IMR-90 (cell line): ENCODE measurements at regions of chr10 and their contacts with region 1.

Region 1: GRCh38 chr10:110681023-110681681 is 37.0 kb downstream of the RBM20 start:
- DNase-seq: peak; percentile 31
- ATAC-seq: peak; percentile 49; the same call in 1 of the 2 replicates
- H3K4me3 ChIP-seq: no peak overlapping the region
- H3K27ac ChIP-seq: no peak overlapping the region
- H3K4me1 ChIP-seq: peaks cover 10% of the 10 kb centered on the region
- H3K27me3 ChIP-seq: peaks cover 2% of the 10 kb centered on the region; the same call in 1 of the 2 replicates
- CTCF ChIP-seq: peak; percentile 44
- POLR2A ChIP-seq: no peak
- RAD21 ChIP-seq: peak; percentile 46

Region 2: GRCh38 chr10:110643653-110644597 is 37.2 kb before region 1 on chr10 and contains the start of gene RBM20:
- CTCF ChIA-PET with region 1: no interaction called
- POLR2A ChIA-PET with region 1: no interaction called
- dilution Hi-C with region 1: no loop called
- in situ Hi-C with region 1: no loop called
- intact Hi-C with region 1: loop called (anchors 5 kb)
- DNase-seq: no peak
- ATAC-seq: peak; percentile 83
- H3K4me3 ChIP-seq: peak within 1 kb of the TSS; percentile 95
- H3K27ac ChIP-seq: no peak within 1 kb of the TSS
- H3K4me1 ChIP-seq: peaks cover 2% of the 10 kb centered on the region; the same call in 1 of the 2 replicates
- H3K27me3 ChIP-seq: peaks cover 45% of the 10 kb centered on the region
- CTCF ChIP-seq: no peak
- POLR2A ChIP-seq: no peak
- RAD21 ChIP-seq: no peak
- total RNA-seq, gene RBM20: under 0.01 TPM in 2 replicates

Region 3: DNA sequence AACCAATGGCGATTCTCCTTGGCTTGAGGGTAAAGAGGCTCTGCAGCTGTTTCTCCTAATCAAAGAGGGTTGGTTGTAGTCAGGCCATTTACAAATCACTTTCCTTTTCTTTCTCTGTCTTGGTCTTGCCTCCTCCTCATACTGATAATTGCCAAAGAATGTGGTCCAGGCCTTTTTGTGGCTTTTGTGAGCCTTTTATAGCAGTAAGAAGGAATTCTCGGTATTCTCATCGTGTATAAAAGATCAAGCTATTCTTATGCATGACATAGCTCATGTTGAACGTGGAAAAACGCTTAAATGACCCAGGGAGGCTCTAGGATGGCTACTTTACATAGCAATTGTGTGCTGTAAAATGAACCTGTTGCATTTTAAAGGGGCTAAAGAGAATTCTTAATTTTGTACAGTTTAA is 25.5 kb after region 1 on chr10:
- CTCF ChIA-PET with region 1: interaction called, 6 read pairs
- POLR2A ChIA-PET with region 1: no interaction called
- dilution Hi-C with region 1: no loop called
- in situ Hi-C with region 1: no loop called
- intact Hi-C with region 1: loop called (anchors 2 kb)
- DNase-seq: peak; percentile 94
- ATAC-seq: peak; percentile 95
- H3K4me3 ChIP-seq: no peak overlapping the region
- H3K27ac ChIP-seq: peak overlapping the region; percentile 92; the same call in 1 of the 2 replicates
- H3K4me1 ChIP-seq: peaks cover 8% of the 10 kb centered on the region
- H3K27me3 ChIP-seq: no peaks in the 10 kb centered on the region
- CTCF ChIP-seq: no peak
- POLR2A ChIP-seq: no peak
- RAD21 ChIP-seq: no peak